AG04450 (cell line): ENCODE measurements at regions of chr15 and their contacts with region 1.

Region 1: DNA sequence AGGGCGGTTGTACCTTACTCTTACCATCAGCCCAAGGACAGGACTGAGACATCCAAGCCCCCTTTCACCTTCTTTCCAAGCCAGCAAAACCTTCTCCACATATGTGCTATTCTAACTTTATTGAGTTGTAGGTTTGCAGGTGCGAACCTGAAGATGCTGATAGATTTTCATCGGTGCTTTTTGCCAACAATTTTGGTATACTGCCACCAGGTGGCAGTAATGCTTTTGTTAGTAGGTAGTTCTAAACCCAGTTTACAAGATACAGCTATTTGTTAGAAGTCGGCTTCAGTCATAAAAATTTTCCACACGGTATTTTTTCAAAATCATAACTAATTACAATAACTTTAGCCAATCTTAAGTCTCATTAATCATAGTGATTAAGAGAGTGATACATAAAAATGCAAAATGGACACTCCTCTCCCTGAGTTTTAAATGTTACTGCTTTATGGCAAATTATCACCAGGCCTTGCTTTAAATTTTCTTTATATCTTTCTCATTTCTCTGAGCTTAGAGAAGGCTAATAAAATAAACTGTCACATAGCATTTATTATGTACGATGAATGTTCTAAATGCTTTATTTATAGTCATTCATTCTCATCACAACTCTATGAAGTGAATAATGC is 636 bp downstream of the TBC1D21 start:
- DNase-seq: peak; percentile 18
- H3K4me3 ChIP-seq: no peak overlapping the region
- H3K27ac ChIP-seq: no peak overlapping the region
- H3K27me3 ChIP-seq: peaks cover 34% of the 10 kb centered on the region
- CTCF ChIP-seq: peak; percentile 71

Region 2: DNA sequence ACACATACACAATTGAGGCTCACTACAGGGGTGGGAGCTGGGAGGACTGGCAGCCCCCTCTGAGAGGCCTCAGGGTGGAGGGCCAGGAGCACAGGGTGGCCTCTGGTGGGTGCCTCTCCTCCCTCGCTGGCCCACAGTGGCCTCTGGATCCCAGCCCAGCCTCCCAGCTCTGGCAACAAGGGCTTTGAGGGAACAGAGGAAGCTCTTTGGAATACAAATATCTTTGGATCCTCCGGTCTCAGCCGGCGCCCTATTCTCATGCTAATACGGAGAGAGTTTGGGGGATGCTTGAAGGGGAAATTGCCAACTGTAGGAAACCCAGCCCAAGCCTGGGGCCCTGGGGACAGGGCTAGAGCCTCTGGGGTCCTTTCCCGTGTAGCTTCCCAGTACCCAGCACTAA is 87.5 kb before region 1 on chr15:
- CTCF ChIA-PET with region 1: interaction called, 10 read pairs
- POLR2A ChIA-PET with region 1: no interaction called
- DNase-seq: no peak
- H3K4me3 ChIP-seq: no peak overlapping the region
- H3K27ac ChIP-seq: no peak overlapping the region
- H3K27me3 ChIP-seq: peaks cover 59% of the 10 kb centered on the region
- CTCF ChIP-seq: no peak

Region 3: GRCh38 chr15:73897441-73898261 is 23.7 kb after region 1 on chr15:
- CTCF ChIA-PET with region 1: interaction called, 22 read pairs
- POLR2A ChIA-PET with region 1: no interaction called
- DNase-seq: peak; percentile 76
- H3K4me3 ChIP-seq: no peak overlapping the region
- H3K27ac ChIP-seq: peak overlapping the region; percentile 75
- H3K27me3 ChIP-seq: peaks cover 5% of the 10 kb centered on the region
- CTCF ChIP-seq: peak; percentile 94

Region 4: GRCh38 chr15:73936181-73936580 is 62.2 kb after region 1 on chr15:
- CTCF ChIA-PET with region 1: interaction called, 11 read pairs
- POLR2A ChIA-PET with region 1: no interaction called
- DNase-seq: no peak
- H3K4me3 ChIP-seq: no peak overlapping the region
- H3K27ac ChIP-seq: peak overlapping the region; percentile 47
- H3K27me3 ChIP-seq: no peaks in the 10 kb centered on the region
- CTCF ChIP-seq: peak; percentile 57

Region 5: GRCh38 chr15:73964736-73965093 is 90.7 kb after region 1 on chr15:
- CTCF ChIA-PET with region 1: interaction called, 43 read pairs
- POLR2A ChIA-PET with region 1: no interaction called
- DNase-seq: peak; percentile 29
- H3K4me3 ChIP-seq: no peak overlapping the region
- H3K27ac ChIP-seq: no peak overlapping the region
- H3K27me3 ChIP-seq: no peaks in the 10 kb centered on the region
- CTCF ChIP-seq: peak; percentile 98